B cell (primary cell): ENCODE measurements at regions of chr2 and their contacts with region 1.

Region 1: GRCh38 chr2:100394111-100394641 is 23.3 kb downstream of the CHST10 start:
- DNase-seq: peak; percentile 91
- ATAC-seq: peak; percentile 75
- H3K4me3 ChIP-seq: peak overlapping the region in 3 of 5 experiments; percentile 25 to 44 (median 28)
- H3K4me3 Mint-ChIP-seq: peak overlapping the region; percentile 81
- H3K27ac ChIP-seq: peak overlapping the region; percentile 76 to 85
- H3K27ac Mint-ChIP-seq: peak overlapping the region; percentile 94
- H3K4me1 ChIP-seq: peaks cover 25 to 29% of the 10 kb centered on the region in 2 donors
- H3K4me1 Mint-ChIP-seq: peaks cover 33% of the 10 kb centered on the region
- H3K27me3 ChIP-seq: no peaks in the 10 kb centered on the region
- H3K27me3 Mint-ChIP-seq: no peaks in the 10 kb centered on the region
- CTCF ChIP-seq: no peak

Region 2: GRCh38 chr2:99926986-99927385 is 467.2 kb before region 1 on chr2:
- CTCF ChIA-PET with region 1: no interaction called
- POLR2A ChIA-PET with region 1: no interaction called
- intact Hi-C with region 1: loop called (anchors 10 kb)
- DNase-seq: no peak
- ATAC-seq: no peak
- H3K4me3 ChIP-seq: no peak overlapping the region
- H3K4me3 Mint-ChIP-seq: peak overlapping the region; percentile 29
- H3K27ac ChIP-seq: peak overlapping the region; percentile 80 to 93
- H3K27ac Mint-ChIP-seq: peak overlapping the region; percentile 66
- H3K4me1 ChIP-seq: peaks cover 55 to 68% of the 10 kb centered on the region in 2 donors
- H3K4me1 Mint-ChIP-seq: peaks cover 83% of the 10 kb centered on the region
- H3K27me3 ChIP-seq: no peaks in the 10 kb centered on the region
- H3K27me3 Mint-ChIP-seq: no peaks in the 10 kb centered on the region
- CTCF ChIP-seq: no peak

Region 3: DNA sequence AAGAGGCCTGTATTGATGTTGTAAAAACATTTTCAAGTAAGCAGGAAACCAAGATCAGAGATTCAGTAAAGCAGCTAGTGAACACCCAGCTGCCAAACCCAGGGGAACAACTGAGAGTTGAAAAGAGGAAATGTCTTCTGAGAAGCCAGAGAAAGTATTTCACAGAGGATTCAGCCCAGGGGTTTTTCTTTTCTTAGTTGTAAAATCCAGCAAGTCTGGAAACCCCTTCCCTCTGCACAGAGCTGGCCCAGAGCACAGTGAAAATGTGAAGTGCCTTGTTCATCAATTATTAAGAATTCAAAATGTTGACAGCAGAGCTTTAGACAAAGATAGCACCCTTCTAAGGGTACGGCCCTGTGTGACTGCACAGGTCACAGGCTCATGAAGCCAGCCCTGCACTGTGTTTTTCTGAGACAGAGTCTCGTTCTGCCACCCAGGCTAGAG is 280.2 kb before region 1 on chr2:
- CTCF ChIA-PET with region 1: no interaction called
- POLR2A ChIA-PET with region 1: no interaction called
- intact Hi-C with region 1: loop called (anchors 10 kb)
- DNase-seq: peak; percentile 74
- ATAC-seq: peak; percentile 50
- H3K4me3 ChIP-seq: peak overlapping the region in 3 of 5 experiments; percentile 16 to 39 (median 25)
- H3K4me3 Mint-ChIP-seq: peak overlapping the region; percentile 78
- H3K27ac ChIP-seq: peak overlapping the region; percentile 72 to 84
- H3K27ac Mint-ChIP-seq: peak overlapping the region; percentile 93
- H3K4me1 ChIP-seq: peaks cover 62 to 67% of the 10 kb centered on the region in 2 donors
- H3K4me1 Mint-ChIP-seq: peaks cover 81% of the 10 kb centered on the region
- H3K27me3 ChIP-seq: no peaks in the 10 kb centered on the region
- H3K27me3 Mint-ChIP-seq: no peaks in the 10 kb centered on the region
- CTCF ChIP-seq: no peak

Region 4: GRCh38 chr2:100381240-100381639 is 12.9 kb before region 1 on chr2:
- CTCF ChIA-PET with region 1: interaction called, 28 read pairs
- POLR2A ChIA-PET with region 1: interaction called, 3 read pairs
- intact Hi-C with region 1: loop called (anchors 1 kb)
- DNase-seq: peak; percentile 91
- ATAC-seq: peak; percentile 91
- H3K4me3 ChIP-seq: no peak overlapping the region
- H3K4me3 Mint-ChIP-seq: no peak overlapping the region
- H3K27ac ChIP-seq: no peak overlapping the region
- H3K27ac Mint-ChIP-seq: no peak overlapping the region
- H3K4me1 ChIP-seq: peaks cover 0 to 6% of the 10 kb centered on the region in 2 donors
- H3K4me1 Mint-ChIP-seq: peaks cover 8% of the 10 kb centered on the region
- H3K27me3 ChIP-seq: peaks cover 0 to 4% (median 0%) of the 10 kb centered on the region in 4 experiments
- H3K27me3 Mint-ChIP-seq: no peaks in the 10 kb centered on the region
- CTCF ChIP-seq: peak; percentile 91

Region 5: DNA sequence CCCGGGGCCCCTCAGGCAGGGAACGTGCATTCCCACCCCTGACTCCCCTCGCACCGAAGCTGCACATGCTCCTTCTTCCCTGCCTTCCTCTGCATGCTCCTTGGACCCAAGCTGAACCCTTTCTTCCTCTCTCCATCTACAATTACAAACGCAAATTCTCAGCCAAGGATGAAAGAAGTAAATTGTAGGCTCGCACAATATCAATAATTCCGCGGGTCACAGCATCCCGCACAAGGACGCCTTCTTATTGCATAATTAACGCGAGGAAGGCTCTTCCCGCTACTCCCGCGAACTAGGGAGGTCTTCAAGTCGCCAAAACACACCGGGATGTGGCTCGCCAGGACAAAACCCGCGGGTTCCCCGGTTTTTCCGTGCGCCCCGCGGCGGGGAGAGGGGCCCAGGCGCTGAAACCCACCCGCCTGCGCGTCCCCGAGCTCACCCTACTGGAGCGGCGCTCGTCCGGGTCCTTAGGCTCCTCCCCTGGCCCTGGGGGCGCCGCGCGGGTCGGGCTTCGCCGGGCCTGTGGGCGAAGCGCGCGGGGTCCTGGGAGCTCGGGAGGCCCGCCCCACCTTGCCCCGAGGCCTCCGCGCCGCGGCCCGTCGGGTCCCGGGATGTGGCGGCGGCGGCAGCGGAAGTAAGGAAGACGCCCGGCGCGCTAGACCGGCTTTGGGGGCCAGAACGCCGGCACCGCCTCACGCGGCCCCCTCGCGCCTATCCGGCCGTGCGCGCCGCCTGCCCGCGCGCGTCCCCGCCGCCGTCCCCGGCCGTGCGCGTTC is 22.9 kb after region 1 on chr2 and contains the start of gene CHST10:
- CTCF ChIA-PET with region 1: interaction called, 3 read pairs
- POLR2A ChIA-PET with region 1: interaction called, 4 read pairs
- intact Hi-C with region 1: loop called (anchors 1 kb)
- DNase-seq: peak; percentile 77
- ATAC-seq: peak; percentile 93
- H3K4me3 ChIP-seq: peak within 1 kb of the TSS; percentile 65 to 95 (median 79)
- H3K4me3 Mint-ChIP-seq: peak within 1 kb of the TSS; percentile 93
- H3K27ac ChIP-seq: peak within 1 kb of the TSS in 1 of 2 donors; percentile 60
- H3K27ac Mint-ChIP-seq: peak within 1 kb of the TSS; percentile 54
- H3K4me1 ChIP-seq: peaks cover 11 to 14% of the 10 kb centered on the region in 2 donors
- H3K4me1 Mint-ChIP-seq: peaks cover 22% of the 10 kb centered on the region
- H3K27me3 ChIP-seq: no peaks in the 10 kb centered on the region
- H3K27me3 Mint-ChIP-seq: no peaks in the 10 kb centered on the region
- CTCF ChIP-seq: no peak
- total RNA-seq, gene CHST10: 9.9 and 10.7 TPM in 2 replicates